Endothelial cell of umbilical vein (primary cell): ENCODE measurements at regions of chr4 and their contacts with region 1.

Region 1: DNA sequence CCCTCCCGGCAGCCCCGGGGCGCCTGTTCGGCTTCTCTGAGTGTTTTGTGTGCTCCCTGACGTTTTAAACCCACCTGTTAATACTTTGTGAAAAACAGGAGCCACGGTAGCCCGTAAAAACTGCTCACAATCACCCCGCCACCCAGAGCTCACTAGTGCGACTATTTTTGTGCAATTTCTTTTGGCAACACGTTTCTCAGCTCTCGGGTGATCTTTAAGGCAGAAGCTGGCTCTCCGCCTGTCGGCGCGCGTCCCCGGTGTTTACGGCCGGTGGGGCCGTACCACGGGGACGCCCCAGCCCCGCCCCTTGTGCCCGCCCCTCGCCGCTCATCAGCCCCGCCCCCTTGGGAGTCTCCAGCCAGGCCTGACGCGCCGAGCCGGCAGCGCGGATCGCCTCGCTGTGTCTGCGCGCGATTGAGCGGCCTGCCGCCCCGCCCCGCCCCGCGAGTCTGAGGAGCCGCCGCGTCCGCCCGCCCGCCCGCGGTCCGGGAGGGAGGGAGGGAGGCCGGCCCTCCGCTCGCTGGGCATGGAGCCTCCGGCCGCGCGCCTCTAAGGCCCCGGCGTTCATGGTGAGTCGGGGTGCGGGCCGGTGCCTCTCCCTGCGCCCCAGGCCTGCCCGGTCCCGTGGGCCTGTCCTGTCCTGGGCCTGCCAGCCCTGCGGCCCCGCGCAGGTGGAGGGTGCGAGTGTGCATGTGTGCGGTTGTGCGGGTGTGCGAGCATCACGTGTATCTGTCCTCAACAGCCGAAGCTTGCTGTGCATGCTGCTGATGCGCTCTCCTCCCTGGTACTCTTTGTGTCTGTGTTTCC is 56.2 kb upstream of the TADA2B start:
- DNase-seq: peak; percentile 92
- H3K4me3 ChIP-seq: peak overlapping the region; percentile 62 to 80 (median 73)
- H3K27ac ChIP-seq: peak overlapping the region; percentile 77
- H3K4me1 ChIP-seq: peaks cover 60% of the 10 kb centered on the region
- H3K27me3 ChIP-seq: no peaks in the 10 kb centered on the region
- CTCF ChIP-seq: no peak
- POLR2A ChIP-seq: peak; percentile 87

Region 2: GRCh38 chr4:6783053-6783981 is 203.7 kb before region 1 on chr4:
- CTCF ChIA-PET with region 1: no interaction called
- POLR2A ChIA-PET with region 1: no interaction called
- dilution Hi-C with region 1: no loop called
- intact Hi-C with region 1: loop called (anchors 2 kb)
- DNase-seq: peak; percentile 84
- H3K4me3 ChIP-seq: peak overlapping the region; percentile 75 to 99 (median 83)
- H3K27ac ChIP-seq: peak overlapping the region; percentile 89
- H3K4me1 ChIP-seq: peaks cover 10% of the 10 kb centered on the region
- H3K27me3 ChIP-seq: no peaks in the 10 kb centered on the region
- CTCF ChIP-seq: no peak
- POLR2A ChIP-seq: no peak

Region 3: DNA sequence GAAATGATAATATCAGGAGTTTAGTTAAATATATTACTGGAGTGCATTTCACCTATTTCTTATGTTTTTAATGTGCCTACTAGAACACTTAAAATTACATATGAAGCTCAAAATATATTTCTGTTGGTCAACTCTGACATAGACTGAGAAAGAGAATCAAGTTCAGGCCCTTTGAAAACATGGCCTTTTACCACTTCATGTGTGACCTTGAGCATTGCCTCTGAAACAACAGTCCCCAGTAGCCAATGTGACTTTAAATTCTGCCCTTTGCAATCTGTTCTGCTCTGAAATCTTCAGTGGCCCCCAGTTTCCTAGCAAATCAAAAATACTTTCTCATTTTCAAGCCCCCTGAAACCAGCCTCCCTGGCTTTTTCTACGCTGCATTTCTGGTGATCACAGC is 127.4 kb before region 1 on chr4:
- CTCF ChIA-PET with region 1: no interaction called
- POLR2A ChIA-PET with region 1: no interaction called
- dilution Hi-C with region 1: no loop called
- intact Hi-C with region 1: no loop called
- DNase-seq: no peak
- H3K4me3 ChIP-seq: no peak overlapping the region
- H3K27ac ChIP-seq: no peak overlapping the region
- H3K4me1 ChIP-seq: peaks cover 7% of the 10 kb centered on the region
- H3K27me3 ChIP-seq: no peaks in the 10 kb centered on the region
- CTCF ChIP-seq: no peak
- POLR2A ChIP-seq: no peak

Region 4: DNA sequence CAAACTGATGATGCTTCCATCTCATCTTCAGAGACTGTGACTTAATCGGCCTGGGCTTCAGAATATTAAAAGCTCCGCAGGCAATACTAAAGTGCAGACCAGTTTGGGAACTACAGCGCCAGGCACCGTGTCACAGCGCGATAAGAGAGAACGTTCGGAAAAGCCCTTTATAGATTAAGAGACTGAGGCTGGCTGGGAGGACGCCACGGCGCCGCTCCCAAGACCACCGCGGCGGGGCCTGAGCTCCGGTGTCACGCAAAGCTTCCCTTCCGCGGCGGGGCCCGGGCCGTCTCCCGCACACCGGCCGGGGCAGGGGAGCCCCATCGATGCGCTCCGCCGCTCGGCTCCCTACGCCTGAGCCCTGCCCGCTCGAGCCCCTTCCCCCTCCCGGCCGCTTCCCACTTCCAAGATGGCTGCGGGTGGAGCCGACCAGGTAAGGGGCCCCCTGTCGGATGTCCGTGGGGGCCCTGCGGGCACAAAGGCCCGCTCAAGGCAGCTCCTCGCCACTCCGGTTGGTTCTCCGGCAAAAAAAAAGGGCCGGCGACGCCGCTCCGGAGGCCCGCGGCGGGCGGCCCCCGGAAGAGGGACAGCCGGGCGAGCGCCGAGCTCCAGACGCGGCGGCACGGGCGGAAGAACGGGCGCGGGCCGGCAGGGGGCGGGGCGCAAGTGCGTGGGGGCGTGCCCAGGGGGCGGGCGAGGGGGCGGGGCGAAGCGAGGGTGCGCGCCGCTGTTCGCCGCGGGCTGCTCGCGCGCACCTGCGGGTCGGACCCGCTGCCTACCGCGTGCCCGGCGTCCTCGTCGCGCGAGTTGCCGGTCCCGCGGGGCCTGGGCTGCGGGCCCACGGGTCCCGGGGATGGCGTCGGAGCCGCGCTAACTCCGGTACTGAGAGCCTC is 77.7 kb before region 1 on chr4 and contains the start of gene TBC1D14:
- CTCF ChIA-PET with region 1: interaction called, 7 read pairs
- POLR2A ChIA-PET with region 1: interaction called, 6 read pairs
- dilution Hi-C with region 1: no loop called
- intact Hi-C with region 1: loop called (anchors 1 kb)
- DNase-seq: peak; percentile 85
- H3K4me3 ChIP-seq: peak within 1 kb of the TSS; percentile 65 to 80 (median 73)
- H3K27ac ChIP-seq: peak within 1 kb of the TSS; percentile 91
- H3K4me1 ChIP-seq: peaks cover 16% of the 10 kb centered on the region
- H3K27me3 ChIP-seq: peaks cover 0 to 9% of the 10 kb centered on the region in 2 experiments
- CTCF ChIP-seq: peak in 1 of 2 donors; percentile 23
- POLR2A ChIP-seq: peak; percentile 56
- total RNA-seq, gene TBC1D14: 23.3 and 24.8 TPM in 2 replicates

Region 5: GRCh38 chr4:6942238-6942800 is 44.7 kb before region 1 on chr4:
- CTCF ChIA-PET with region 1: no interaction called
- POLR2A ChIA-PET with region 1: no interaction called
- dilution Hi-C with region 1: no loop called
- intact Hi-C with region 1: no loop called
- DNase-seq: peak; percentile 79
- H3K4me3 ChIP-seq: no peak overlapping the region
- H3K27ac ChIP-seq: no peak overlapping the region
- H3K4me1 ChIP-seq: peaks cover 21% of the 10 kb centered on the region
- H3K27me3 ChIP-seq: no peaks in the 10 kb centered on the region
- CTCF ChIP-seq: no peak
- POLR2A ChIP-seq: no peak

Region 6: DNA sequence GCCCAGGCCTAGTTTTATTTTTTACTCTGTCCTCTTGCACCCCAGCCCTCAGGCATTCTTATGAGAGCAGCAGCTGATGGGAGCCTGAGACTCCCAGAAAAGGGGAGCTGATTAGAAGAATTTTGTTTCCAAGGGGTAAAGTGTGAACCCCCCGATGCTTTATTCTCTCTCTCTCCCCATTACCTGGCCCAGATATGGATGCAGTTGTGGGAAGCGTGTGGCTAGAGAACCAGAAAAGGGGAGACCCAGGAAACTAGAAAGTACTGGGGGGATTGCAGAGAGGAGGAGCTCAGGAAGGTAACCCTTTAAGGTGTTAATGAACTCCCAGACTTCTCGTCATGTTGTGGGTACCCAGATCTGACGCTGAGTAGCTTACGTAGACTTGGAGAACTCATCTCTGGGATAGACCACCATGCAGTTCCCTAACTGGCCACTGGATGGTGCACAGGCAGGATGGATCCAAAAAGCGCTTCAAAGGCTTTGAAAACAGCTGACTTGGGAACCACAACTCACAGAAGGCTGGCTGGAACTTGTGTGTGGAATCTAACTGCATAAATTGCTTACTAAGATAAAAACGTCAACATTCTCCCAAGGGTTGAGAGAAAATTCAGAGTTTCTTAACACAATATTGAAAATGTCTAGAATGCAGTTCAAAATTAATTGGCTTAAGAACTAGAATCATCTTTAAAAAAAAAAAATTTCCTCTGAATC is 12.7 kb before region 1 on chr4:
- CTCF ChIA-PET with region 1: interaction called, 28 read pairs
- POLR2A ChIA-PET with region 1: no interaction called
- dilution Hi-C with region 1: no loop called
- intact Hi-C with region 1: loop called (anchors 1 kb)
- DNase-seq: peak; percentile 90
- H3K4me3 ChIP-seq: no peak overlapping the region
- H3K27ac ChIP-seq: no peak overlapping the region
- H3K4me1 ChIP-seq: no peaks in the 10 kb centered on the region
- H3K27me3 ChIP-seq: no peaks in the 10 kb centered on the region
- CTCF ChIP-seq: peak; percentile 93 to 95
- POLR2A ChIP-seq: no peak

Region 7: DNA sequence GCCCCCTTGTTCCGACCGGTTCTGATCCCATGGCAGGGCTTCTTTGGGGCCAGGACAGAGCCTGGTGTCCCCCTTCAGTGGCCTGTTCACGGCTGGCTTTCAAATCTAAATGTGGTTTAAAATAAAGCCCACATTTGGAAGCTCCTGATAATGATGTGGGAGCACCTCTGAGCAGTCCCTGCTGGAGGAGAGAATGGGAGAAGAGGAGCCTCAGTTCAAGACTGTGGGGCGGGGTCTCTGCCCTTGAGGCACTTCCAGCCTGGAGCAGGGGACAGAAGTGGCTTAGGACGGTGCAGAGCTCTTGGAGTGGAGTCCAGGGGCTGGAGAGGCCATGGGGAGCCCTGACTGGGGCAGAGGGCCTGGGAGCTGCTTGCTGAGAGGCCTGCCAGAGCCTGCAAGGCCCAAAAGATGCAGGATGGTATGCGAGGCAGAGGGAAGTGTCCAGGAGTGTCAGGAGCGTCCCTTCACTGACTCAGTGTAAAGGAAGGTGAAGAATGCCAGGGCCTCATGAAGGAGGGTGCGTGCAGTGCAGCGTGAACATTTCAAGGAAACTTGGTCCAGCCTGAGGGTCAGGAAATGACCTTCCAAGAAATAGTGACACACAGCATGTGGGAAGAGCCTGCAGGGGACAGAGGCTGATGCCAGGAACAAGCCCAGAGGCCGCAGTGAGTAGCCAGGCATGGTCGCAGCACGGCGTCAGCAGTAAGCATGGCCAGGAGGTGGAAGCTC is 35.1 kb after region 1 on chr4:
- CTCF ChIA-PET with region 1: no interaction called
- POLR2A ChIA-PET with region 1: no interaction called
- dilution Hi-C with region 1: loop called (anchors 5 kb)
- intact Hi-C with region 1: no loop called
- DNase-seq: no peak
- H3K4me3 ChIP-seq: no peak overlapping the region
- H3K27ac ChIP-seq: no peak overlapping the region
- H3K4me1 ChIP-seq: no peaks in the 10 kb centered on the region
- H3K27me3 ChIP-seq: no peaks in the 10 kb centered on the region
- CTCF ChIP-seq: no peak
- POLR2A ChIP-seq: no peak

Region 8: DNA sequence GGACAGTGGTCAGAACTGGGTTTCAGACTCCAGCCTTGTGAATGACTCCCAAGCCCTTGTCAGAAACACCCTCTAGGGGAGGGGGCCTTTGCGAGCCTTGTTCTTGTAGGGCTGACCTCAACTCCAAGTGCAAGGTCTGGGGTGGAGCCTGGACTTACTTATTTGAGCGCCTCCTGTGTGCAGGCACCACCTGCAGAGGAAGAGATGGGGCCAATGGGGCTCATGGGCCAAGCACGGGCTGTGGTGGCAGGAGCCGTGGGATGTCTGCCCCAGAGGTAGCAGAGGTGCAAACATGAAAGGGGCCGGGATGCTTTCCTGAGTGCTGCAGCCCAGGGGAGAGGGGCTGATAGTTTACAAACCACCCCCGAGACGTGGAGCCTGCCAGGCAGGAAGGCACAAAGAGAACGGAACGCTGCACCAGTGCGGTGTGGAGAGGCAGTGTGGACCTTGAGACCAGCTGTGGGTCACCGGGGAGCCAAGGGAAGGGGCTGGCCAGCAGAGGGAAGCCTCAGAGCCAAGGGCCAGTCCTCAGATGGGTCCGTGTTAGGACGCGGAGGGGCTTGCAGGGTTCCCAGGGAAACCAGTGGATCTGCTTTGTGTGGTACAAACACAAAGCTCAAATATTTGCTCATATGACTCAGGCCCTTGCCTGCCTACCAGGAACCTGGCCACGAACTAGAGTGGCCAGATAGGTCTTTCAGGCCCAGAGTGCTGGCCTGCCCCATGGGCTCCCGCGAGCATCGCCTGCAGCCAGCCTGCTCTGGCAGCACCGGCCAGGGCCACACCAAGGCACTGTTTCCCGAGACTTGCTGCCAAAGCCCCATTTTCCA is 47.5 kb after region 1 on chr4:
- CTCF ChIA-PET with region 1: no interaction called
- POLR2A ChIA-PET with region 1: no interaction called
- dilution Hi-C with region 1: no loop called
- intact Hi-C with region 1: no loop called
- DNase-seq: no peak
- H3K4me3 ChIP-seq: no peak overlapping the region
- H3K27ac ChIP-seq: no peak overlapping the region
- H3K4me1 ChIP-seq: no peaks in the 10 kb centered on the region
- H3K27me3 ChIP-seq: no peaks in the 10 kb centered on the region
- CTCF ChIP-seq: no peak
- POLR2A ChIP-seq: no peak

Region 9: DNA sequence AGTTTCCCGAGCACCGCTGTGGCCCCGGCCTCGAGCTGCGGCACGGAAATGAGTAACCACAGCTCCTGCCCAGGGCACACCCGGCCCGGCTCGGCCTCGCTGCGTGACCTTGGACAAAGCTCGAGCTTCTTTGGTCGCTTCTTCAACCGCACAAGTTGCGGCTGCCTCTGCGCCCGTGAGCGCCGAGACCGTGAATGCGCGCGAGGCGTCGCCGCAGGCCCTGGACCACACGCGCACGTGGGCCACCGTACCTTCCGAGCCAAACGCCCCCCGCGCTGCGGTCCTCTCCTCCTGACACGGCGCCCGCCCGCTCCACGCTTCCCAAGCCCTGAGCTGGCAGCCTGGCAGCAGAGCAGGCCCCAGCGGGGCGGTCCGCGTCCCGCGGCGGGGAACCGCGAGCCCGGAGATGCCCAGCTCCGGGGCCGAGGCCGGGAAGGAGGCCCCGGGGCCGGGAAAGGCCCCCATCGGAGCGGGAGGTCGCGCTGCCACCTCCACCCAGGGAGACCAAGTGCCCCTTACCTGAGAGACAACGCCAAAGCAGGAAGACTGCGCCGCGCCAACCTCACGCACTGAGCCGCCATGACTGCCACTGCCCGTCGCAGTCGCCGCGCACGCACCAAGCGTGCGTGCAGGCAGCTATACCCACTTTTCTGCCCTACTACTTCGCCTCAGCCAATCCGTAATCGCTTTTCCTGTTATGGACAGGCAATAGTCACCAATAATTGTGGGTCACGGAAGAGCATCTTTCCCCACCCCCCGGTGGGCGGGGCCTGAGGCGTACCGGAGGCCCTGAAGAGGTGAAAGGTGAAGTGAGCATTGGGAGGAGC is 80.7 kb after region 1 on chr4 and contains the start of gene GRPEL1:
- CTCF ChIA-PET with region 1: interaction called, 5 read pairs
- POLR2A ChIA-PET with region 1: interaction called, 3 read pairs
- dilution Hi-C with region 1: no loop called
- intact Hi-C with region 1: loop called (anchors 1 kb)
- DNase-seq: peak; percentile 100
- H3K4me3 ChIP-seq: peak within 1 kb of the TSS; percentile 62 to 99 (median 71)
- H3K27ac ChIP-seq: peak within 1 kb of the TSS; percentile 57
- H3K4me1 ChIP-seq: peaks cover 20% of the 10 kb centered on the region
- H3K27me3 ChIP-seq: peaks cover 0 to 3% of the 10 kb centered on the region in 2 experiments
- CTCF ChIP-seq: no peak
- POLR2A ChIP-seq: peak; percentile 94
- total RNA-seq, gene GRPEL1: 42.6 and 47.3 TPM in 2 replicates

Region 10: GRCh38 chr4:7171191-7171900 is 184.4 kb after region 1 on chr4:
- CTCF ChIA-PET with region 1: no interaction called
- POLR2A ChIA-PET with region 1: no interaction called
- dilution Hi-C with region 1: no loop called
- intact Hi-C with region 1: no loop called
- DNase-seq: no peak
- H3K4me3 ChIP-seq: no peak overlapping the region
- H3K27ac ChIP-seq: no peak overlapping the region
- H3K4me1 ChIP-seq: no peaks in the 10 kb centered on the region
- H3K27me3 ChIP-seq: peaks cover 0 to 5% of the 10 kb centered on the region in 2 experiments
- CTCF ChIP-seq: no peak
- POLR2A ChIP-seq: no peak